Calu3 (cell line): ENCODE measurements at regions of chr3 and their contacts with region 1.

Region 1: GRCh38 chr3:31960793-31961431 is 20.1 kb downstream of the OSBPL10 start:
- DNase-seq: peak; percentile 27
- H3K4me3 Mint-ChIP-seq: no peak overlapping the region
- H3K27ac Mint-ChIP-seq: peak overlapping the region; percentile 61
- H3K4me1 Mint-ChIP-seq: peaks cover 40% of the 10 kb centered on the region
- H3K27me3 Mint-ChIP-seq: no peaks in the 10 kb centered on the region
- CTCF ChIP-seq: no peak

Region 2: GRCh38 chr3:31505371-31506048 is 455.4 kb before region 1 on chr3:
- CTCF ChIA-PET with region 1: no interaction called
- intact Hi-C with region 1: no loop called
- DNase-seq: no peak
- H3K4me3 Mint-ChIP-seq: no peak overlapping the region
- H3K27ac Mint-ChIP-seq: no peak overlapping the region
- H3K4me1 Mint-ChIP-seq: no peaks in the 10 kb centered on the region
- H3K27me3 Mint-ChIP-seq: peaks cover 32% of the 10 kb centered on the region
- CTCF ChIP-seq: no peak

Region 3: DNA sequence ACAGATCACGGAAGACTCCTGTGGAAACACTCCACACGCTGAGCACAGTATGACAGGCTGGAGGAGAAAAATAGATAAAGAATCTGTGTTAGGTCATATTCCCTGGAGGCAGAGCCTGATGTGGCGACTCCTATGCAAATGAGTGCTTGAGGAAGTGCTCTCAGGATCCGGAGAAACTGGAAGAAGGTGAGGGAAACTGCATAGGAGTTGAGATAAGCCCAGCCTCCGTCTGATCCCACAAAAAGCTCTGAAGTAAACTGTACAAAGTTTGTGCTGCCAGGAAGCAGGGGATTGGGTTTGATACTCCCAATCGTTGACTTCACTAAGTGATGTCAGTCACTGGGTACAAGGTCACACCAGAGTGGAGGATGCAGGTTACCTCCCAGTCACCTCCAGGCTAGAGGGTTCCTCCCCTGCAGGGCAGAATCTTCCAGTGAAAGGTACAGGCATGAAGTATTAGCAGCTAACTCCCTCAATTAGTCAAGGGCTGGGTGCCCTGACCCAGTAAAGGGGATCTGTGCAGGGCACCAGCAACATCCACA is 13.2 kb before region 1 on chr3:
- CTCF ChIA-PET with region 1: interaction called, 3 read pairs
- intact Hi-C with region 1: loop called (anchors 2 kb)
- DNase-seq: peak; percentile 41
- H3K4me3 Mint-ChIP-seq: no peak overlapping the region
- H3K27ac Mint-ChIP-seq: peak overlapping the region; percentile 8
- H3K4me1 Mint-ChIP-seq: peaks cover 41% of the 10 kb centered on the region
- H3K27me3 Mint-ChIP-seq: no peaks in the 10 kb centered on the region
- CTCF ChIP-seq: no peak

Region 4: DNA sequence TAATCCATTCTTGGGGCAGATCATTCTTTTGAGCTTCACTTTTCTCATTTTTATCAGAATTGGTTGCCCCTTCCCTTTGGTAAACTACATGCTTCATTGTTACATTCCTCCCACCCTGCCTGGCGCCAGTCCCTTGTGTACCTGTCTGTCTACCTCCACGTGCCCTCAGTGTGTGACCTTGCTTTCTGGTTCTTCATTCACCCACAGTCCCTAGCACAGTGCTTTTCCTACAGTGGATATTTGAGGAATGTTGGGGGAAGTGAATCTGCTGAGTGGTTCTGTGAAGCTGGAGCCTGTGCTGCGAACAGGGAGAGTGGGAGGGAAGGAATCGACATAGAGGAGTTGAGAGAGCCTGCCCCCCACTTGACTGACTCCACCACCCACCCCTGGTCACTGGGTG is 168.9 kb after region 1 on chr3:
- CTCF ChIA-PET with region 1: interaction called, 16 read pairs
- intact Hi-C with region 1: no loop called
- DNase-seq: no peak
- H3K4me3 Mint-ChIP-seq: no peak overlapping the region
- H3K27ac Mint-ChIP-seq: no peak overlapping the region
- H3K4me1 Mint-ChIP-seq: no peaks in the 10 kb centered on the region
- H3K27me3 Mint-ChIP-seq: no peaks in the 10 kb centered on the region
- CTCF ChIP-seq: no peak